OCI-LY7 (cell line): ENCODE measurements at regions of chr13 and their contacts with region 1.

Region 1: DNA sequence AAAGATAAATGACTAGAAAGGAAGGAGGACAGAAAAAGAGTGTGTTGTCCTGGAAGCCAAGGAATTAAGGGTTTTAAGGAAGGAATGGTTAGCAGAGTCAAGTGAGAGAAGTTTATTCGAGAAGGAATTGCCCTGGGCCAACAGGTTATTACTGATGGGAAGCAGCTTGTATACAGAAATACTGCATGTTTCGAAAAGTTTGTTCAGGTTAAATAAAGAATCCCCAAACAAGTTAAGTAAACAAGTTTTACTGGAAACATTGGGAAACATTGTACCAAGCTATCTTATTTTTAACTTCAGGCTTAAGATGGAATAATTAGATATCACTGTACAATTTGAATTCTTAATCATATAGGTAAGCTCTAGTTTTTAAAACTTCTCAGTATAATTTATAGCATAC is 28.2 kb upstream of the FBXL3 start:
- DNase-seq: no peak
- H3K4me3 ChIP-seq: no peak overlapping the region
- H3K27ac ChIP-seq: no peak overlapping the region
- H3K4me1 ChIP-seq: no peaks in the 10 kb centered on the region
- CTCF ChIP-seq: no peak

Region 2: DNA sequence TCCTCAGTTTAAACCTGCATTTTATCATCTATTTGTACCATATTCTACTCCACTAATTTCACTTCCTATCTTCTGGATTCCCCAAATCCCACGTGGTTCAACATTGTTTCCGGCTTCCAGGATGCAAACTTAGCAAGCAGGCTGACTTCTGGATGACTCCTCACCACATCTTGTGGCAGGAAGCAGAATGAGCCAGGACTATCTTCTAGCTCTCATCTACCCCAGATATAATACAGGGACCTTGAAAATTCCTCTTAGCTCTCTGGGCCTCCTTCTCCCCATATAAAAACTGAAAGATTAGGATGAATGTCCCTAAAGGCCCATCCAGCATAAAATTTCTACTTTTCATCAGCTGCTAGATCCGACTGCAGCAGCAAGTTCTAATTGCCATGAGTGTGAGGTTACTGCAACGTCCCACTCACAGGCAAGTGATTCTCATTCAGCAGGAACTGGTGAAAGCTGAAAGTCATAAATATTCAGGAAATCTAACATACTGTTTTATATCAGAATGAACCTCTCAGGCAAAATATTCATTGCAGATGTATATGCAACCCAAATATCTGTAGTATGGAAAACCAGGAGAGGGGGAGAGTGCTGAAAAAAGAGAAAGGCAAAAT is 262.3 kb before region 1 on chr13:
- CTCF ChIA-PET with region 1: no interaction called
- POLR2A ChIA-PET with region 1: no interaction called
- intact Hi-C with region 1: no loop called
- DNase-seq: no peak
- H3K4me3 ChIP-seq: no peak overlapping the region
- H3K27ac ChIP-seq: no peak overlapping the region
- H3K4me1 ChIP-seq: no peaks in the 10 kb centered on the region
- CTCF ChIP-seq: no peak

Region 3: GRCh38 chr13:77042566-77043178 is 12.5 kb before region 1 on chr13:
- CTCF ChIA-PET with region 1: no interaction called
- POLR2A ChIA-PET with region 1: interaction called, 11 read pairs
- intact Hi-C with region 1: no loop called
- DNase-seq: no peak
- H3K4me3 ChIP-seq: no peak overlapping the region
- H3K27ac ChIP-seq: no peak overlapping the region
- H3K4me1 ChIP-seq: no peaks in the 10 kb centered on the region
- CTCF ChIP-seq: no peak